Brain microvascular endothelial cell (primary cell): ENCODE measurements at regions of chr12 and their contacts with region 1.

Region 1: DNA sequence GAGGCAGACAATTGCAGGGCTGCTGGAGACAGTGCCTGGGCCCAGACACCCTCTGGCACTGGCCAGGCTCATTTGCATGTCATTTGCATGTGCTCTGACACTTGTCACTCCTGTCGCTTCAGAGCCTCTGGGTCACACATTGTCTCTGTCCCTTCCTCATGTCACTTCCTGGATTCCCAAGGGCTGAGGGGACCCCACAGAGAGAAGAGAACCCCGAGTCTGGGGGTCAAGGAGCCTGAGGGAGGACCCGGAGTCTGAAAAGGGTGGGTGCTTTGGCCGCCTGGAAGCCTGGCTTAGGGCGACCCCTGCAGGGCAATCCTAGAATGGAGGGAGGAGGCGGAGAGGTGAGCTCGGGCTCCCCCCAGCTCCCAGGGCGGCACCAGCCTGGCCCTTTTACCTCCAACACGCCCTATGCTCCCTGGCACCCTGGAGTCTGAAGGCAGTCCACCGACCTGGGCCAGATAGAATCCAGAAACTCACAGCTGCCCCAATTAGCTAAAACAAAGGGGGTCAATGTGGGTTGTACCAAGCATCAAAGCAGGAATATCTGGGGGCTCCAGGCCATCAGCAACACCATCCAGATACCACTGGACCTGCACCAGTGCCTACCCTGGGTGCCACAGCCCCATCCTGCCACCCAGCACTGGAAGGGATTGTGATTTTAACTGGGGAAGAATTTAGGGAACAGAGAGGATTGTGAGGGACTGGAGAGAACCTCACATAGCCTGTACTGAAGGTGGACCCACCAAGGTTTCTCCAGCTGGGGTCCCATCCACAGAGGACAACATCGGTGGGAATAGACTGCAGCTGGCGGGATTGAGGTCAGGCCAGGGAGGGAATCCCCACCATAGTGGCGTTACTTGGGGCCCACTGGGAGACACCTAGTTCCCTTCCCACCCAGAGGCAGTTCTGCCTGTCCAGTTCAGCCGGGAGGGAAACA is 21.8 kb upstream of the KRT78 start:
- DNase-seq: peak; percentile 34
- H3K4me3 ChIP-seq: no peak overlapping the region
- H3K27ac ChIP-seq: peak overlapping the region; percentile 46
- H3K27me3 ChIP-seq: no peaks in the 10 kb centered on the region
- CTCF ChIP-seq: peak; percentile 89

Region 2: GRCh38 chr12:52380271-52380694 is 490.3 kb before region 1 on chr12:
- in situ Hi-C with region 1: loop called (anchors 25 kb)
- DNase-seq: peak; percentile 25
- H3K4me3 ChIP-seq: no peak overlapping the region
- H3K27ac ChIP-seq: no peak overlapping the region
- H3K27me3 ChIP-seq: no peaks in the 10 kb centered on the region
- CTCF ChIP-seq: peak; percentile 81

Region 3: GRCh38 chr12:52634266-52635056 is 236.2 kb before region 1 on chr12:
- in situ Hi-C with region 1: loop called (anchors 25 kb)
- DNase-seq: no peak
- H3K4me3 ChIP-seq: no peak overlapping the region
- H3K27ac ChIP-seq: no peak overlapping the region
- H3K27me3 ChIP-seq: peaks cover 3% of the 10 kb centered on the region
- CTCF ChIP-seq: no peak

Region 4: DNA sequence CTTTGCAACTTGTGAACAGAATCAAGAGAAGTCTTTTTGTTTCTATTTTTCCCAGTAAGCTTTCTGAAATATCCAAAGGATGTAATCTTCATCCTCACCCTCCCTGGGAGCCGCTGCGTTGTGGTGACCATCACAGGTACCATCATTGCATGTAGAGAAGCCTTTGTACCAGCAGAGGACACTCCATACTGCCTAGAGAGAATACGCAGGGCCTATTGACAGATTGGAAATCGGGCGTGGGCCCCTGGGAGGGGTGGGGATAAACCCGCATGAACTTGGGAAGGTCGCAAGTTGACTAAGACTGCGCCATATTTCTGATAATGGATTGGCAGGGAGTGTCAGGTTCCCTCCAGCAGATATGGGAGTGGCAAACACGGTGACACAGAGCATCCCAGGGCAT is 203.1 kb before region 1 on chr12:
- in situ Hi-C with region 1: no loop called
- DNase-seq: no peak
- H3K4me3 ChIP-seq: no peak overlapping the region
- H3K27ac ChIP-seq: no peak overlapping the region
- H3K27me3 ChIP-seq: peaks cover 1% of the 10 kb centered on the region
- CTCF ChIP-seq: peak; percentile 57

Region 5: GRCh38 chr12:52774629-52775250 is 95.9 kb before region 1 on chr12:
- in situ Hi-C with region 1: no loop called
- DNase-seq: no peak
- H3K4me3 ChIP-seq: no peak overlapping the region
- H3K27ac ChIP-seq: no peak overlapping the region
- H3K27me3 ChIP-seq: peaks cover 10% of the 10 kb centered on the region
- CTCF ChIP-seq: no peak